BJ (cell line): ENCODE measurements at regions of chr2 and their contacts with region 1.

Region 1: GRCh38 chr2:68031542-68032160 is 31.2 kb downstream of the C1D start:
- DNase-seq: no peak
- H3K4me3 ChIP-seq: no peak overlapping the region
- H3K27me3 ChIP-seq: no peaks in the 10 kb centered on the region
- CTCF ChIP-seq: peak; percentile 61

Region 2: GRCh38 chr2:67733517-67733916 is 298.1 kb before region 1 on chr2:
- CTCF ChIA-PET with region 1: interaction called, 11 read pairs
- POLR2A ChIA-PET with region 1: no interaction called
- DNase-seq: no peak
- H3K4me3 ChIP-seq: no peak overlapping the region
- H3K27me3 ChIP-seq: no peaks in the 10 kb centered on the region
- CTCF ChIP-seq: peak; percentile 58

Region 3: GRCh38 chr2:67854798-67855197 is 176.9 kb before region 1 on chr2:
- CTCF ChIA-PET with region 1: interaction called, 20 read pairs
- POLR2A ChIA-PET with region 1: no interaction called
- DNase-seq: no peak
- H3K4me3 ChIP-seq: no peak overlapping the region
- H3K27me3 ChIP-seq: no peaks in the 10 kb centered on the region
- CTCF ChIP-seq: peak; percentile 8; the same call in 1 of the 2 replicates

Region 4: GRCh38 chr2:67880291-67880761 is 151.3 kb before region 1 on chr2:
- CTCF ChIA-PET with region 1: interaction called, 10 read pairs
- POLR2A ChIA-PET with region 1: no interaction called
- DNase-seq: no peak
- H3K4me3 ChIP-seq: no peak overlapping the region
- H3K27me3 ChIP-seq: no peaks in the 10 kb centered on the region
- CTCF ChIP-seq: no peak